HCT116 (cell line): ENCODE measurements at regions of chr7 and their contacts with region 1.

Region 1: GRCh38 chr7:129468087-129468486 is 33.9 kb downstream of the STRIP2 start:
- DNase-seq: no peak
- ATAC-seq: no peak
- H3K4me3 ChIP-seq: no peak overlapping the region
- H3K27ac ChIP-seq: no peak overlapping the region
- H3K4me1 ChIP-seq: peaks cover 0 to 9% of the 10 kb centered on the region in 2 experiments; a peak in 3 of 4 replicates
- H3K27me3 ChIP-seq: no peaks in the 10 kb centered on the region
- CTCF ChIP-seq: no peak
- POLR2A ChIP-seq: no peak
- RAD21 ChIP-seq: no peak

Region 2: DNA sequence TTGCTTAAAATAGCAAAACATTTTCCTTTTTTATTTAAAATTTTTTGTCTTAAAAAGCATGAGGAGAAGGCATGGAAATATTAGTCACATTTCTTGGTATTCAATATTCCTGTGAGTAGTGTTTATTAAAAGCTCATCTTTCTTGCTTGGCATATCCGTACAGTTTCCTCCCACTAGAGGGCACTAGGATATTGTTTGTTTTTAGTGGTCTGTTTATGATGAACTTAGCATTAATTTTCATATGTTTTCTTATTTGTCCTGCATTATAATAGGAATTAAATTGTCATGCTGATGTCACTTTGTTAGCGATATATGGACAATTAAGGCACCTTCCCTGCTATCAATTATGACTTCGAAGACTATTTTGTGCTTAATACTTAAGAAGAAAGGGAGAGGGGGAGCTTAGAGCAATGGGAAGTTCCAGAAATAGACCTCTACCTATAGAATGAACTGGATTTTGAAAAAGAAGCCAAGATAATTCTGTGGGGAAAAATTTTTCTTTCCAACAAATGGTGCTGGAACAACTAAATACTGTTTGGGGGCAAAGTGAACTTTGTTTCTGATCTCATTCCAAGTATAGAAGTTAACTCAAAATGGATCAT is 124.9 kb before region 1 on chr7:
- CTCF ChIA-PET with region 1: interaction called, 19 read pairs
- POLR2A ChIA-PET with region 1: no interaction called
- RAD21 ChIA-PET with region 1: no interaction called
- intact Hi-C with region 1: loop called (anchors 1 kb)
- DNase-seq: peak; percentile 37
- ATAC-seq: peak; percentile 77
- H3K4me3 ChIP-seq: no peak overlapping the region
- H3K27ac ChIP-seq: no peak overlapping the region
- H3K4me1 ChIP-seq: no peaks in the 10 kb centered on the region
- H3K27me3 ChIP-seq: no peaks in the 10 kb centered on the region
- CTCF ChIP-seq: peak; percentile 65 to 75 (median 71)
- POLR2A ChIP-seq: no peak
- RAD21 ChIP-seq: peak; percentile 70

Region 3: GRCh38 chr7:129367700-129368388 is 100.2 kb before region 1 on chr7:
- CTCF ChIA-PET with region 1: interaction called, 41 read pairs
- POLR2A ChIA-PET with region 1: no interaction called
- RAD21 ChIA-PET with region 1: interaction called, 4 to 8 read pairs
- intact Hi-C with region 1: loop called (anchors 1 kb)
- DNase-seq: peak; percentile 49
- ATAC-seq: peak; percentile 95
- H3K4me3 ChIP-seq: no peak overlapping the region
- H3K27ac ChIP-seq: no peak overlapping the region
- H3K4me1 ChIP-seq: peaks cover 2 to 8% of the 10 kb centered on the region in 2 experiments; a peak in 2 of 4 replicates
- H3K27me3 ChIP-seq: no peaks in the 10 kb centered on the region
- CTCF ChIP-seq: peak; percentile 80 to 90 (median 86)
- POLR2A ChIP-seq: no peak
- RAD21 ChIP-seq: peak; percentile 91

Region 4: DNA sequence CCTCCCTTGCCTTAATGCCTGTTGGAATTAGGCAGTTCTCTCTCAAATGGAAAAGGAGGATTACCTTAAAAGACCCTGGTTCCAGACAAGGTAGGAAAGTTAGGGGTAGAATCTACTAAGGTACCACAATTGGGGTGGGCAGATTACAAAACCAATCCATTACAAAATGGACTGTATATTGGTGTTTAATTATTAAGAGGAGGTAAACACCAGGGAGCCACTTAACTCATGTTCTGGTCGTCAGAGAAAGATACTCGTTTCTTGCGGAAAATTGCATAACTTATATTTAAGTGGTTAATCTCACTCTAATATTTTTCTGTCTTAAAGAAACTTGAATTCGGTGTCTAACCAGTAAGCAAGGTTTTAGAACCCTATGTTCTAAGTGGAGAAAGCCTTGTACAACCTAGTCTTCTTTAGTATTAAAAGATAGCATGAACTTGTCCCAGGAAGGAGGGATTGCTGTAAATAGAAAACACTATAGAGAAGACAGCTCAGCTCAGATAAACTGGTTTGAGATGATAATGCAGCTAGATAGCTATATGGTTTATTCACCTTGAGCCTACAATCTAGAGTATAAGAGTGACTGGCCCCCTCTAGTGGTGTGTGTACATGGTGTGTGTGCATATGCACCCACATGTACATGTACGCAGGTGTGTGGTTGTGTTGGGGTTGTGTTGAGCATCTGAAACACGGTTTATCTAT is 91.9 kb before region 1 on chr7:
- CTCF ChIA-PET with region 1: interaction called, 11 read pairs
- POLR2A ChIA-PET with region 1: no interaction called
- RAD21 ChIA-PET with region 1: no interaction called
- intact Hi-C with region 1: no loop called
- DNase-seq: peak; percentile 32
- ATAC-seq: peak; percentile 100
- H3K4me3 ChIP-seq: no peak overlapping the region
- H3K27ac ChIP-seq: no peak overlapping the region
- H3K4me1 ChIP-seq: no peaks in the 10 kb centered on the region
- H3K27me3 ChIP-seq: no peaks in the 10 kb centered on the region
- CTCF ChIP-seq: peak; percentile 30 to 83 (median 81); a peak in 5 of 6 replicates
- POLR2A ChIP-seq: no peak
- RAD21 ChIP-seq: peak; percentile 47

Region 5: DNA sequence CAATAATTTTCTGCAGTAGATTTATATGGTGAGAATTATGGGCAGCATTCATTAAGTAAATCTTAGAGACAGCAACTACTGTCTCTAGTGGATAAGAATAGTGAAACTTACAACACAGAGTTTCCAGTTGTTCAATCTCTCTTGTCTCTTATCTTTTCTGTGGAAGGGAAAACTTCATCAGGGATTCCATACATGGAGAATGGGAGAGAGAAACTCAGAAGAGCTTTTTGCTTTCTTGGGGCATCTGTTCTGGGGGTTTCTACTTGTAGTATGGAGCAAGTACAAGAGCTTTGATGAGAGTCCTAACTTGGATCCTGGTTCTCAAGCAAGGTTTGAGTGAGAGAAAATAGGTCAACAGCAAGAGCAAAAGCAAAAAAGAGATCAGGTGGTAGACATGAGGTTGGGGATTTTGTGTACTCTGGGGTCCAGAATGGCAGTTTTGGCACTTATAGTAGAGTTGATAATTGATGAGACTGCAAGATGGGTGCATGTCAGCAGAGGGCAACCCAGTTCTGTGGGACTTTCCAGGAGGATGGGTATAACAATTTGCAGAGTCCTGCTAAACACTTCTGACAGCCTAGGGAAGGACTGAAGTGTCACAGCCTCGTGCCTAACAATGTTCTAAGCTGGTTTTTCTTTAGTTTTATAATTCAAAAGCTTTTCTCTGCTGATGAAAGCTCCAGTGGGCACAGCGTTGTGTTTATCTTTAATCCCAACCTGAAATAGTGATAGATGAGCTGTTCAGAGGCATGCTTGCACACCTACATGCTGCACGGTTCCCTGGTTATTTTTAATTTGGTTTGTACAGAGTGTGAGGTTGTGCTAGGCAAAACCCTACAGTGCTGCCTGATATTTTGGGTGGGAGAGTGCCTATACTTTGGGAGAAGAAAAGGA is 65.9 kb before region 1 on chr7:
- CTCF ChIA-PET with region 1: no interaction called
- POLR2A ChIA-PET with region 1: no interaction called
- RAD21 ChIA-PET with region 1: no interaction called
- intact Hi-C with region 1: loop called (anchors 5 kb)
- DNase-seq: no peak
- ATAC-seq: peak; percentile 57
- H3K4me3 ChIP-seq: no peak overlapping the region
- H3K27ac ChIP-seq: no peak overlapping the region
- H3K4me1 ChIP-seq: peaks cover 7 to 15% of the 10 kb centered on the region in 2 experiments
- H3K27me3 ChIP-seq: no peaks in the 10 kb centered on the region
- CTCF ChIP-seq: peak in 2 of 3 experiments; percentile 43 to 47; a peak in 3 of 6 replicates
- POLR2A ChIP-seq: no peak
- RAD21 ChIP-seq: peak; percentile 65

Region 6: DNA sequence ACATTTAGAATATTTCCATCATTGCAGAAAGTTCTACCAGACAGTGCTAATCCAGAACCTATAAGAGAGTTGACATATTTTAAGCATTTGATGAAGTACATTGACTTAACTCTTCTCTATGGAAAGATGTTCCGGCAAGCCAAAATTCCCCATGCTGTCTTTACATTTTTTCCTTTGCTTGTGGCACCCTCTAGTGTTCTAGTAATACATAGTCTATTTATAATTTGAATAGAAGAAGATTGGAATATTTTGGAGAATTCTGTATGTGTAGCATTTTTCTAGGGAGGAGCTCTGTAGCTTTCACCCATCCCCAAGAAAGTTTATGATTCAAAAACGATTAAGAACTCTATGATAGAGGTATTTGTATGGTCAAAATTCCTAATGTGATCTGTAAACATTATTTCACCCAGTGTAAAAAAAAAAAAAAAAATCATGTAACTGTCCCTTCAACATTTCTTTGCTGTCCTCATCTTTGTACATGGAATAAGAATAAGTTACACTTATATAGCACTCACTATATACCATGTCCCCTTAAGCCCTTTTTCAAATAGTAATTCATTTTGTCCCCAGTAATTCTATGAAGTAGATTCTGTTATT is 176.6 kb after region 1 on chr7:
- CTCF ChIA-PET with region 1: interaction called, 4 read pairs
- POLR2A ChIA-PET with region 1: no interaction called
- RAD21 ChIA-PET with region 1: no interaction called
- intact Hi-C with region 1: loop called (anchors 2 kb)
- DNase-seq: peak; percentile 38
- ATAC-seq: peak; percentile 60
- H3K4me3 ChIP-seq: no peak overlapping the region
- H3K27ac ChIP-seq: no peak overlapping the region
- H3K4me1 ChIP-seq: peaks cover 8 to 16% of the 10 kb centered on the region in 2 experiments; a peak in 3 of 4 replicates
- H3K27me3 ChIP-seq: no peaks in the 10 kb centered on the region
- CTCF ChIP-seq: peak; percentile 33 to 64 (median 59)
- POLR2A ChIP-seq: no peak
- RAD21 ChIP-seq: peak; percentile 76

Region 7: GRCh38 chr7:130010689-130011412 is 542.8 kb after region 1 on chr7:
- CTCF ChIA-PET with region 1: no interaction called
- POLR2A ChIA-PET with region 1: no interaction called
- RAD21 ChIA-PET with region 1: no interaction called
- intact Hi-C with region 1: loop called (anchors 10 kb)
- DNase-seq: peak; percentile 87
- ATAC-seq: peak; percentile 26; the same call in 1 of the 2 replicates
- H3K4me3 ChIP-seq: peak overlapping the region in 1 of 2 experiments; percentile 1; a peak in 1 of 4 replicates
- H3K27ac ChIP-seq: peak overlapping the region; percentile 89
- H3K4me1 ChIP-seq: peaks cover 36 to 45% of the 10 kb centered on the region in 2 experiments
- H3K27me3 ChIP-seq: no peaks in the 10 kb centered on the region
- CTCF ChIP-seq: peak in 2 of 3 experiments; percentile 91 to 96; a peak in 4 of 6 replicates
- POLR2A ChIP-seq: no peak
- RAD21 ChIP-seq: no peak